ENCODE measurements at regions of chr3 and their contacts with region 1.

Region 1: DNA sequence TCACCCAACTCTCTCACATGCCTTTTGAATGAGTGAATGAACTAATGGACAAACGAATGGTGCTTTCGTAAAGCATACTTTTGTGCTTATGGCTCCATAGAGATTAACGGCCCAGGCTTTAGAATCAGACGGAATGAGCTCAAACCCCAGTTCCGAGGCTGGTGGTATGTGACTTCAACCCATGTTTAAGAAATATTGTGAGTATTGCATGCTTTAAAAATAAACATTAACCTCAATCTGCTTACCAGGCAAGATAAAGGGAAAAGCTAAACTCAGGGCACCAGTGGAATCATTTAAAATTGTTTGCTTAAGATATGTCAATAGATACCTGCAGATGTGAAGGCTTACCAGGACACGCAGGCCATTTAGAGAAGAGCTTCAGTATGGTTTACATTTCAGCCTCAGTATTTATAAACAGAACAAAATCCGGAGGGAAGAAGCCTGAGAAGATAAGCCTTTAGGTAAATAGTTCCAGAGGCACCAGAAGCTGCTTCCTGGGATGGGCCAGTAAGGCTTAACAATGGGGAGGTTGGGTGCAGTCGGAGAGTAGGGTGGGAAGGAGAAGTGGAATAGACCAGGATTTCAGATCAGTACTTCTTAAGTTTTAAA is 186.4 kb downstream of the ADAMTS9 start:
- DNase-seq: no peak
- H3K4me3 ChIP-seq: no peak overlapping the region
- H3K27me3 ChIP-seq: peaks cover 2% of the 10 kb centered on the region; the same call in 1 of the 2 replicates
- CTCF ChIP-seq: no peak

Region 2: GRCh38 chr3:63343674-63344073 is 1157.7 kb before region 1 on chr3:
- CTCF ChIA-PET with region 1: no interaction called
- POLR2A ChIA-PET with region 1: interaction called, 12 read pairs
- DNase-seq: peak; percentile 97
- H3K4me3 ChIP-seq: no peak overlapping the region
- H3K27me3 ChIP-seq: peaks cover 2% of the 10 kb centered on the region
- CTCF ChIP-seq: no peak

Region 3: DNA sequence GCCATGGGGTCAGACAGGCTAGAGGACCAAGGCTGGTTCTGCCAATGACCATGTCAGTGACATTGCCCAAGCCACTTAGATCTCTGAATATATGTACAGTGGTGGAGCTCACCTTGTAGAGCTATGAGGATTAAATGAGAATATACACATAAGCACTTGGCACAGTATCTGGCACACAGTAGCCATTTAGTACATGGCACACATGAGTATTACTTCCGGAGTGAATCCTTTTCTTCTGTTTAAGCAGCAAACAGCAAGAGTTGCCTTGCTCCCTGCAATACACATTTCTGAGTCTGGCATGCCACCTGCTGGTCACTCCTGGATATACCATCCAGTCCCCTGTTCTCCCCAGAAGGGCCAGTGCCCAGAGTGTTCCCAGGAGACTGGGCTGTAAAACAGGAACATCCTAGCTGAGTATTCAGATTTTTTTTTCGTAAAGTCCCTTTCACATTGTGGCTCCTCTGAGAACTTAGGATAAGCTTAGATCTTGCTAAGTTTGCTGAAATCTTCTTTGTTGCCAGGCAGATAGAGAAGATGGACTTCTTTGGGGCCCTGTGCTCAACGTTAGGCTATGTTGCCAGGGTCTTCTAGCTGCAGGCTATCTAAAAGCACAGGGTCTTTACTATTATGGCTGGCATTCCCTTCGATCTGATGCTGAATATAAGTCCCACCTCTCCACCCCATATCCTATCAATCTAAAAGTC is 17.0 kb before region 1 on chr3:
- CTCF ChIA-PET with region 1: interaction called, 11 read pairs
- POLR2A ChIA-PET with region 1: no interaction called
- DNase-seq: peak; percentile 13
- H3K4me3 ChIP-seq: no peak overlapping the region
- H3K27me3 ChIP-seq: peaks cover 2% of the 10 kb centered on the region
- CTCF ChIP-seq: peak; percentile 80

Measured in BJ (cell line).